MCF 10A (cell line): ENCODE measurements at regions of chr1 and their contacts with region 1.

Region 1: GRCh38 chr1:31745096-31745945 is 18.8 kb downstream of the ADGRB2 start:
- DNase-seq: peak; percentile 66
- H3K4me3 Mint-ChIP-seq: no peak overlapping the region
- H3K27ac Mint-ChIP-seq: no peak overlapping the region
- H3K4me1 Mint-ChIP-seq: peaks cover 9% of the 10 kb centered on the region
- H3K27me3 Mint-ChIP-seq: no peaks in the 10 kb centered on the region
- CTCF ChIP-seq: peak; percentile 89

Region 2: DNA sequence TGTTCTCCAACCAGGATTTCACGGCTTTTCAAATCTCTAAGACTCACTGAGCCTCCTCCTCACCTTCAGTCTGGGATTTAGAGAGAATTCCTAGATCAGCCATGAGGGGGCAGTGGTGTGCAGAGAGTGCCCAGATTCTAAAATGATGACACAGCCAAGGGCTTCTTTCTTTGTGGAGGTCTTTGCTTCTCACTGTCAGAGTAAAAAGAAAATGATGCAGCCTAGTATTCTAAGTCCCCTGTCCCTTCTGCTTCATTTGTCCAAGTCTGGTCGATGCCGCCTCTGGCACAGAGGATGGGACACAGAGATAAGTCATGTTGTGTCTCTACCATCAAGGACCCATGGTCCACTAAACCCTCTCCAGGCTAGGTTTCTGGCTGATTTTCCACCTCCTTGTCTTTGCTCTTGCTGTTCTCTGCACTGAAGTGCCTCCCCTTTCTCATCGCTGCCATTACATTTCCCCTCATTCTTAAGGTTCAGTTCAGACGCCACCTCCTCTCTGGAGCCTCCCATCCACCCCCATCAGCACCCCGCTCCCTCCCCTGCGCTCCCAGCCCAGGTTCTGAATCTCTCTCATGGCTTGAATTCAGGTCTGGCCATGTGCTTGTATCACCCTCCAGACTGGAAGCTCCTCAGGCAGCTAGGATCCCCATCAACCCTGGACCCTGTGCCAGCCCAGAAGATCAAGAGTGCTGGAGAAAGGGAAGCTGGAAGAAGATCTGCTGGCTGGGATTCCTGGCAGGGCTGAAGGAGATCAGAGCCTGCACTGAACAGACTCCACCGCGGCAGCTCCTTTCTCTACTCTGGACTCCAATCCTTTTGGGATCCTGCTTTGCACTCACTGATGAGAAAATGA is 181.0 kb before region 1 on chr1:
- CTCF ChIA-PET with region 1: interaction called, 13 read pairs
- POLR2A ChIA-PET with region 1: no interaction called
- intact Hi-C with region 1: loop called (anchors 2 kb)
- DNase-seq: peak; percentile 72
- H3K4me3 Mint-ChIP-seq: no peak overlapping the region
- H3K27ac Mint-ChIP-seq: no peak overlapping the region
- H3K4me1 Mint-ChIP-seq: no peaks in the 10 kb centered on the region
- H3K27me3 Mint-ChIP-seq: no peaks in the 10 kb centered on the region
- CTCF ChIP-seq: peak; percentile 92

Region 3: GRCh38 chr1:31584041-31584868 is 161.1 kb before region 1 on chr1:
- CTCF ChIA-PET with region 1: no interaction called
- POLR2A ChIA-PET with region 1: no interaction called
- intact Hi-C with region 1: no loop called
- DNase-seq: peak; percentile 52
- H3K4me3 Mint-ChIP-seq: no peak overlapping the region
- H3K27ac Mint-ChIP-seq: no peak overlapping the region
- H3K4me1 Mint-ChIP-seq: peaks cover 27% of the 10 kb centered on the region
- H3K27me3 Mint-ChIP-seq: no peaks in the 10 kb centered on the region
- CTCF ChIP-seq: no peak

Region 4: DNA sequence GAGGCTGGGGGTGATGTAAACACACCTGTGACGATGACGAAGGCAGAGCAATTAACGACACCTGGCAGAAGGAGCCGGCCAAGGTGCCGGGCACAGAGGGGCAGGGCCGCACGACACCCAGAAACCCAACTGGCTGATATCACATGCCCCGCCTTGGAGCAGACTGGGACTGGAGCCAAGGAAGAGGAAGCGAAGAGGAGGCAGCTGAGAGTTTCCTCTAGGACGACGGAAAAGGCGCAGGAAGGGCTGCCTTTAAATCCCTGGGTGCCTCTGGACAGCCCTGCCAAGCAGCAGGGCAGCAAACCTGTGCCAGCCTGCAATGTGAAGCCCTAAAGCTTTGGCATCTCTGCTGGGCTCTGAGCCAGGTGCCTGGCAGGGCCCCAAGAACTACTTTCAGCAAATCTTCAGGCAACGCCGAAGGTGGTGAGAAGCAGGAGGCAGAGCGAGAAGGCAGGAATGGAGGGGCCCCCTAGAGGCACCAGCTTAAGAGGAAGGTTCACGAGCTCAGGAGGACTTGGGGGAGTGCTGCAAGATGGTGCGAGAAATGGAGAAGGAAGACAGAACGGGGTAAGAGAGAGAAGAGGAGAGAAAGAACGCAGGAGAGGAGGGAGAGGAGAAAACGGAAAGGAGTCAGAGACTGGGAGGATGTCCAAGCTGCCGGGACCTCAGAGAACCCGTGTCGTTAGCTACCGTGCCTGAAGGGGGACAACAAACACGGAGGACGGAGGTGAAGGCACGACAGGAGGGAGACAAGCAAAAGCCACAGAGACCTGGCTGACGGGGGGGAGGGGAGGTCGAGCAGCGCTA is 75.3 kb before region 1 on chr1:
- CTCF ChIA-PET with region 1: interaction called, 96 read pairs
- POLR2A ChIA-PET with region 1: interaction called, 8 read pairs
- intact Hi-C with region 1: no loop called
- DNase-seq: peak; percentile 97
- H3K4me3 Mint-ChIP-seq: peak overlapping the region; percentile 73
- H3K27ac Mint-ChIP-seq: peak overlapping the region; percentile 62
- H3K4me1 Mint-ChIP-seq: peaks cover 45% of the 10 kb centered on the region
- H3K27me3 Mint-ChIP-seq: no peaks in the 10 kb centered on the region
- CTCF ChIP-seq: no peak

Region 5: GRCh38 chr1:31715087-31715872 is 30.0 kb before region 1 on chr1:
- CTCF ChIA-PET with region 1: interaction called, 16 read pairs
- POLR2A ChIA-PET with region 1: no interaction called
- intact Hi-C with region 1: no loop called
- DNase-seq: peak; percentile 61
- H3K4me3 Mint-ChIP-seq: no peak overlapping the region
- H3K27ac Mint-ChIP-seq: no peak overlapping the region
- H3K4me1 Mint-ChIP-seq: peaks cover 32% of the 10 kb centered on the region
- H3K27me3 Mint-ChIP-seq: peaks cover 13% of the 10 kb centered on the region
- CTCF ChIP-seq: peak; percentile 55

Region 6: DNA sequence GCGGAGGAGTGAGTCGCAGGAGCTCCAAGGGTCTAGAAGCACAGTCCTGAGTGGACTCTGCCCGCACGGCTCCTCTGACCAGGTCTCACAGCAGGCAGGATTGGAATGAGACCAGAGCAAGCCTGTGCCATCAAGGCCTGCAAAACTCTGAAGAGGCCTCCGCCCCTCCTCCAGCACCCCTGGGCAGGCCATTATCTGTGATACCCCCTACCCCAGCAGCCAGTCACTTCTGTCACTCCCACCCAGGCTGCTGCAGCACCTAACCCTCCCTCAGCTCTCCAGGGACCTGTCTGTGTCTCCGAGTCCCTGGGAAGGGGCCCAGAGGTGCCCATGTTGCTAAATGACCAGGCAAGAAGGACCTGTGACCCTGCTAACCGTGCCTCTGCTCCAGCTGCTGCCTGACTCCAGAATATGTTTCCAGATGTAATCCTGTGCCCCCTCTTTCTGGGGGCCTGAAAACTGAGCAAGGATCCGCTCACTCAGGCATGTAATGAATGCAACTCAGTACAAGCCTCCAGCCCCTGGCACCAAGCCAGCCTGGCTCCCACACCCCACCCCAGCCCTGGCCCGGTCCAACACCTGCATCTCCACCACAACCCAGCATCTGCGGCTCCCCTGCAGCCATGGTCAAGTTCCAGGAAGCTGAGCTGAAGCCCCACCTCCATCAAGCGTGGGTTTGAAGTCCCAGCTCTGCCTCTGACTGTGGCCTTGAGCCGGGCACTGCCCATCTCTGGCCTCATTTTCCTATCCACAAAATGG is 19.4 kb before region 1 on chr1:
- CTCF ChIA-PET with region 1: interaction called, 15 read pairs
- POLR2A ChIA-PET with region 1: interaction called, 3 read pairs
- intact Hi-C with region 1: no loop called
- DNase-seq: no peak
- H3K4me3 Mint-ChIP-seq: no peak overlapping the region
- H3K27ac Mint-ChIP-seq: no peak overlapping the region
- H3K4me1 Mint-ChIP-seq: no peaks in the 10 kb centered on the region
- H3K27me3 Mint-ChIP-seq: peaks cover 15% of the 10 kb centered on the region
- CTCF ChIP-seq: no peak

Region 7: GRCh38 chr1:31866450-31867032 is 121.2 kb after region 1 on chr1:
- CTCF ChIA-PET with region 1: no interaction called
- POLR2A ChIA-PET with region 1: no interaction called
- intact Hi-C with region 1: no loop called
- DNase-seq: no peak
- H3K4me3 Mint-ChIP-seq: no peak overlapping the region
- H3K27ac Mint-ChIP-seq: no peak overlapping the region
- H3K4me1 Mint-ChIP-seq: no peaks in the 10 kb centered on the region
- H3K27me3 Mint-ChIP-seq: peaks cover 15% of the 10 kb centered on the region
- CTCF ChIP-seq: no peak

Region 8: DNA sequence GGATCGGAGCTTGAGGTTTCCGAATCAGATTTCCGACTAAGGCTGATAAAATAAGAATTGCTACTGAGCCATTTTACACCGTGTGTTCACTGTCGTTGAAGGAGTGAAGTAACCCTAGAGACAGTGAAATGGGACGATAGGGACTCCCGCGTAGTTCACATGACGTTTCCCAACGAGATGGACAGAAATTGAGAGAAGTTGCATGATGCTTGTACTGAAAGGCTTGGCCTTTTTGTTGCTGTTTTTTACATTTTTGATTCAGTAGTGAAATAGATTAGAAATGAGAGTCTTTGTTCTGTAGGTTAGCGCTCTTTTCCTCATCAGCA is 269.6 kb after region 1 on chr1:
- CTCF ChIA-PET with region 1: no interaction called
- POLR2A ChIA-PET with region 1: no interaction called
- intact Hi-C with region 1: no loop called
- DNase-seq: no peak
- H3K4me3 Mint-ChIP-seq: peak overlapping the region; percentile 98
- H3K27ac Mint-ChIP-seq: peak overlapping the region; percentile 79
- H3K4me1 Mint-ChIP-seq: peaks cover 32% of the 10 kb centered on the region
- H3K27me3 Mint-ChIP-seq: no peaks in the 10 kb centered on the region
- CTCF ChIP-seq: no peak